GM12878 (cell line): ENCODE measurements at regions of chr3 and their contacts with region 1.

Region 1: DNA sequence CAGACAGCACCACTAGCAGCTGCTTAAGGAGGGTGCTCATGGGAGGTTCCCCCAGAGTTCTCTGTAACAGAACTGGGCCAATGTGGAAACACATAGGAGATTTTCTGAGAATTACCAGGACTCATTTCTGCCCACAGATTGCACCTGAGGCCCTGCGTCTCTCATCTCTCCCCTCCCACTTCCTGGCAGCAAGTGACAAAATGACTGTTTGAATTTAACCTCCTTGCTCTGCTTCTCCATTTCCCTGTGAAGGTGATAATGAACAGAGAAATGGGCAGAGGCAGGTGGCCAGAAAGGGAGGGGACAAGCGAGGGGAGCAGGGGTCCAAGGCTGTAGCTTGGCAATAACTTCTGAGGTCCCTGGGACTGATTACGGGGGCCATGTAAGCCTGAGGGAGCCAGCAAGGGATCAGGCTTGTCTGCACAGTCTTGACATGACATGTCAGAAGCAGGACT is 8.0 kb downstream of the EPHB1 start:
- DNase-seq: peak; percentile 64
- ATAC-seq: peak; percentile 68
- H3K4me3 ChIP-seq: no peak overlapping the region
- H3K27ac ChIP-seq: peak overlapping the region; percentile 47
- H3K4me1 ChIP-seq: peaks cover 26% of the 10 kb centered on the region
- H3K27me3 ChIP-seq: no peaks in the 10 kb centered on the region
- CTCF ChIP-seq: no peak
- EP300 ChIP-seq: peak; percentile 60 to 71; a peak in 2 of 4 replicates
- POLR2A ChIP-seq: no peak
- RAD21 ChIP-seq: no peak

Region 2: DNA sequence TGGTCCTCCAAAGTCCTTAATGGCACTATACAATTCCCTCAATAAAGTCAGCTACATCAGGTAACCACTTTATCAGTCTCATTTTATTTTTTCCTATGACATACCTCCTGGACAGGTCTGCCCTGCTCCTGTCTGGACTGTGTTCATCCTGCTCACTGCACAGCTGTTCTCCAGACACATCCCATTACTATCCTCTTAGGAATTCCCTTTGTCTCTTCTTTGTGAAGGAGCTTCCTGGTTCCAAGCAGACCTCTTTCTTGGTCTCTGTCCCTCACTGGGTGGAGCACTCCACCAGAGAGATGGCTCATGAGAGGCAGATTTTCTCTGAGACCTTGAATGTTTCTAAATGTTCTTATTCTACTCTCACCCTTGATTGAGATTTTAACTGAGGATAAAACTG is 212.3 kb before region 1 on chr3:
- CTCF ChIA-PET with region 1: no interaction called
- POLR2A ChIA-PET with region 1: no interaction called
- RAD21 ChIA-PET with region 1: no interaction called
- SMC1A ChIA-PET with region 1: no interaction called
- in situ Hi-C with region 1: no loop called
- intact Hi-C with region 1: no loop called
- DNase-seq: no peak
- ATAC-seq: no peak
- H3K4me3 ChIP-seq: no peak overlapping the region
- H3K27ac ChIP-seq: no peak overlapping the region
- H3K4me1 ChIP-seq: no peaks in the 10 kb centered on the region
- H3K27me3 ChIP-seq: no peaks in the 10 kb centered on the region
- CTCF ChIP-seq: no peak
- EP300 ChIP-seq: no peak
- POLR2A ChIP-seq: no peak
- RAD21 ChIP-seq: no peak

Region 3: GRCh38 chr3:134772011-134772410 is 31.1 kb before region 1 on chr3:
- CTCF ChIA-PET with region 1: no interaction called
- POLR2A ChIA-PET with region 1: no interaction called
- RAD21 ChIA-PET with region 1: no interaction called
- SMC1A ChIA-PET with region 1: no interaction called
- in situ Hi-C with region 1: no loop called
- intact Hi-C with region 1: no loop called
- DNase-seq: no peak
- ATAC-seq: no peak
- H3K4me3 ChIP-seq: no peak overlapping the region
- H3K27ac ChIP-seq: no peak overlapping the region
- H3K4me1 ChIP-seq: no peaks in the 10 kb centered on the region
- H3K27me3 ChIP-seq: no peaks in the 10 kb centered on the region; a peak in 1 of 4 replicates
- CTCF ChIP-seq: no peak
- EP300 ChIP-seq: no peak
- POLR2A ChIP-seq: no peak
- RAD21 ChIP-seq: no peak

Region 4: DNA sequence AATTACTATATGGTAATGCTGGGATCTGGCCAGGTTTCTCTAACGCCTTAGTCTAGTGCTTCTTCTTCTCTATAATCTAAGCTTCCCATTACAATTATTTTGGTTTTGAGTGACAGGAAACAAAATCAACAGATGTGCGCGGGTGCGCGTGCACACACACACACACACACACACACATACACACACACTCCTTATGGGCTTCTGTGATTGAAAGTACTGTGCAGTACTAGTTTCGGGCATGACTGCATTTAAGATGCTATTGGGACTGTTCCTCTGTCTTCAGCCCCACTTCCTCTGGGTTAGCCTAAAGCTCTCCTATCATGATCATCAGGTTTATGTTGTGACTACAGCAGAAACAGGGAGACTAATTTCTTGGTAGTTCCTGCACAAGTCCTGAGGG is 24.1 kb after region 1 on chr3:
- CTCF ChIA-PET with region 1: interaction called, 3 read pairs
- POLR2A ChIA-PET with region 1: no interaction called
- RAD21 ChIA-PET with region 1: interaction called, 3 read pairs
- SMC1A ChIA-PET with region 1: interaction called, 13 read pairs
- in situ Hi-C with region 1: no loop called
- intact Hi-C with region 1: no loop called
- DNase-seq: no peak
- ATAC-seq: peak; percentile 83
- H3K4me3 ChIP-seq: no peak overlapping the region
- H3K27ac ChIP-seq: no peak overlapping the region
- H3K4me1 ChIP-seq: peaks cover 10% of the 10 kb centered on the region
- H3K27me3 ChIP-seq: no peaks in the 10 kb centered on the region
- CTCF ChIP-seq: no peak
- EP300 ChIP-seq: no peak
- POLR2A ChIP-seq: no peak
- RAD21 ChIP-seq: no peak

Region 5: GRCh38 chr3:134885877-134886621 is 83.0 kb after region 1 on chr3:
- CTCF ChIA-PET with region 1: interaction called, 29 read pairs
- POLR2A ChIA-PET with region 1: no interaction called
- RAD21 ChIA-PET with region 1: interaction called, 66 read pairs
- SMC1A ChIA-PET with region 1: interaction called, 59 read pairs
- in situ Hi-C with region 1: no loop called
- intact Hi-C with region 1: loop called (anchors 1 kb)
- DNase-seq: peak; percentile 95
- ATAC-seq: peak; percentile 94
- H3K4me3 ChIP-seq: 0 out of 2 replicates have a peak overlapping the region, but pooled peaks have one; percentile 9
- H3K27ac ChIP-seq: peak overlapping the region; percentile 54
- H3K4me1 ChIP-seq: peaks cover 29% of the 10 kb centered on the region
- H3K27me3 ChIP-seq: no peaks in the 10 kb centered on the region
- CTCF ChIP-seq: peak; percentile 33 to 51 (median 41); a peak in 4 of 6 replicates
- EP300 ChIP-seq: peak; percentile 71 to 88
- POLR2A ChIP-seq: no peak
- RAD21 ChIP-seq: 0 out of 2 replicates have a peak, but pooled peaks have one; percentile 10

Region 6: DNA sequence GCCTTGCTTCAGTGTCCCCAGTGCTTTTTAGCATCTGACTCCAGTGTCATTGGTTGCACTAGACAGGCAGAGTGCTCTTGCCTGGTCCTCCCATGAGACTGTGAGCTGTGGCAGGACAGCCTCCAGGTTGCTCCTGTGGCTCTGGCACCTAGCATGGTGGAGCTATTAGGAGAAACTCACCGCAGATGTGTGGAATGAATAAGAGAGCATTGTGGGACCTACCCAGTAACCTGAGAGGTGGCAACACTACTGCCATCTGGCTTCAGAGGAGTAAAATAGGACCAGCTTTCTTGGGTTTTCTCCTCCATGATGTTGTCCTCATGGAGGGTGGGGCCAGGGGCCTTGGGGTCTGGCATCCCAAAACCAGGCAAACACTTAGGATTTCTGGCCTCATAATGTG is 175.6 kb after region 1 on chr3:
- CTCF ChIA-PET with region 1: interaction called, 14 read pairs
- POLR2A ChIA-PET with region 1: no interaction called
- RAD21 ChIA-PET with region 1: no interaction called
- SMC1A ChIA-PET with region 1: interaction called, 11 read pairs
- in situ Hi-C with region 1: no loop called
- intact Hi-C with region 1: loop called (anchors 5 kb)
- DNase-seq: no peak
- ATAC-seq: peak; percentile 74
- H3K4me3 ChIP-seq: no peak overlapping the region
- H3K27ac ChIP-seq: no peak overlapping the region
- H3K4me1 ChIP-seq: no peaks in the 10 kb centered on the region
- H3K27me3 ChIP-seq: no peaks in the 10 kb centered on the region
- CTCF ChIP-seq: peak in 2 of 3 experiments; percentile 26 to 33; a peak in 2 of 6 replicates
- EP300 ChIP-seq: no peak
- POLR2A ChIP-seq: no peak
- RAD21 ChIP-seq: peak; percentile 26; the same call in 1 of the 2 replicates

Region 7: DNA sequence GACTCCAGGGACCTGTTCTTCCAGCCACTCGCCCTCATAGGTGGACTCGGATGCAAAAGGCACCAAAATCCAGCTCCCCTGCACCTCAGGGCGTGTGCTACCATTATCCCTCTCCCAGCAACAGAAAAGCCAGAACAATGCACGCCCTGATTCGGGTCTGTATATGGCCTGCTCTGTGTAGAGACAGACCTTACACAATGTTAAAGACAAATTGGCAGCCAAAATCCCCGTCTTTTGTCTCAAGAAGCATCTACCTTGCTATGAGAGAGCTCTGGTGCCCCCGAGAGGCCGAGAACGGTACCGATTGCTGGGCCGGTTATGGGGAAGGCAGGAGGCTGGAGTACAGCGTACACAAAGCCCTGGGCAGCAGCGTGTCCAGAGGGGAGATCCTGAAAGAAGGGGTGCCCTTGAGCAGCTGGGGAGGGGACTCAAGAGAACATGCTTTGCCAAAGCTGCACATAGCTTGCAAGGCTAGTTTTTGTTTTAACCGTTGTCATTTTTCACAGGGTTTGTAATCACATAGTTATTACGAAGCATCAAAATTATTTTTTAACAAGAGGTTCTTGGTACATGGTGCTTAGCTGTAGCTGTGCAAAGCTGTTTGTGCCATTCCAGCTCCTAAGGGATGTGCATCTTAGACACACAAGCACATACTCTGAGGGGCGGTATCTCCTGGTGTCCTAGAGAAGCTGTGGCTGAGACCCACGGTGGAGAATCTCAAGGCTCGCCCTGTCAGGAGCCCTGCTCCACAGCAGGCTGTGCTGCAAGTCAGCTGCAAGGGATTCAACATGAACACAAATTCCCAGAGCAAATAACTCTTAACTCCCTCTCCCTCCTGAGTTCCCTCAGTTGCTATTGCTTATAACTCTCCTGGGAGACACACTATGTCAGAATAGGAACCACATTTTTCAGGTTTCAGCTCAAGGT is 700.9 kb after region 1 on chr3:
- CTCF ChIA-PET with region 1: no interaction called
- POLR2A ChIA-PET with region 1: no interaction called
- RAD21 ChIA-PET with region 1: interaction called, 8 read pairs
- SMC1A ChIA-PET with region 1: interaction called, 10 read pairs
- in situ Hi-C with region 1: no loop called
- intact Hi-C with region 1: no loop called
- DNase-seq: peak; percentile 13
- ATAC-seq: peak; percentile 99
- H3K4me3 ChIP-seq: no peak overlapping the region
- H3K27ac ChIP-seq: no peak overlapping the region
- H3K4me1 ChIP-seq: no peaks in the 10 kb centered on the region
- H3K27me3 ChIP-seq: no peaks in the 10 kb centered on the region; a peak in 1 of 4 replicates
- CTCF ChIP-seq: peak; percentile 76 to 81 (median 80)
- EP300 ChIP-seq: no peak
- POLR2A ChIP-seq: no peak
- RAD21 ChIP-seq: peak; percentile 79